Dendritic cell treated with granulocyte-macrophage colony-stimulating factor and Interleukin-4, amounts not matched to agents 40 ng/mL and 50 ng/mL, for 4 days (primary cell): ENCODE measurements at regions of chr17 and their contacts with region 1.

Region 1: DNA sequence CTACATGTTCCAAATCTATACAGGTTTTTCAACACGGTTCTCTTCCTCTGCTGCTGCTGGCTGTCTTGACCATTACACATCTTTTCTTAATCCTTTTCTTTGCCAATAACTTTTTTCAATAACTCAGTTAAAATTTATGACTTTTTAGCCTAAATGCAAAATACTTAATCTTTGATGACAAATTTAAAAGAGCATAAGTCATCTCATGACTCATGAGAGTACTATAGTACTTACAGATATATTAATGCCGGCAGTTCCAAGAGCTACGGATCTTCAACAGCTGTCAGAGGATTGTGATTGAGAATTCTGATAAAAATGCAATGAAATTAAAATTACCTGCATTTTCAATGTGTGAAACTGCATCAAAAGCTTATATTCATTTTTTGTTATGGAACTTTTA is 105.5 kb downstream of the KPNA2 start:
- H3K4me3 Mint-ChIP-seq: no peak overlapping the region
- H3K27ac Mint-ChIP-seq: no peak overlapping the region
- H3K4me1 Mint-ChIP-seq: no peaks in the 10 kb centered on the region
- H3K27me3 Mint-ChIP-seq: no peaks in the 10 kb centered on the region

Region 2: GRCh38 chr17:68640242-68640989 is 499.4 kb after region 1 on chr17:
- intact Hi-C with region 1: loop called (anchors 10 kb)
- H3K4me3 Mint-ChIP-seq: no peak overlapping the region
- H3K27ac Mint-ChIP-seq: no peak overlapping the region
- H3K4me1 Mint-ChIP-seq: no peaks in the 10 kb centered on the region
- H3K27me3 Mint-ChIP-seq: peaks cover 9% of the 10 kb centered on the region